Activated T-helper 1 cell treated with anti-CD3 and anti-CD28 coated beads, Interleukin-12 subunit alpha, Interleukin-12 subunit beta, Interleukin-2, Interleukin-4 antibody, amounts not matched to agents 30 ng/mL and 10 ng/mL and 1 ng/mL, durations not matched to agents 14 hours and 24 hours and 36 hours (primary cell): ENCODE measurements at regions of chr19 and their contacts with region 1.

Region 1: DNA sequence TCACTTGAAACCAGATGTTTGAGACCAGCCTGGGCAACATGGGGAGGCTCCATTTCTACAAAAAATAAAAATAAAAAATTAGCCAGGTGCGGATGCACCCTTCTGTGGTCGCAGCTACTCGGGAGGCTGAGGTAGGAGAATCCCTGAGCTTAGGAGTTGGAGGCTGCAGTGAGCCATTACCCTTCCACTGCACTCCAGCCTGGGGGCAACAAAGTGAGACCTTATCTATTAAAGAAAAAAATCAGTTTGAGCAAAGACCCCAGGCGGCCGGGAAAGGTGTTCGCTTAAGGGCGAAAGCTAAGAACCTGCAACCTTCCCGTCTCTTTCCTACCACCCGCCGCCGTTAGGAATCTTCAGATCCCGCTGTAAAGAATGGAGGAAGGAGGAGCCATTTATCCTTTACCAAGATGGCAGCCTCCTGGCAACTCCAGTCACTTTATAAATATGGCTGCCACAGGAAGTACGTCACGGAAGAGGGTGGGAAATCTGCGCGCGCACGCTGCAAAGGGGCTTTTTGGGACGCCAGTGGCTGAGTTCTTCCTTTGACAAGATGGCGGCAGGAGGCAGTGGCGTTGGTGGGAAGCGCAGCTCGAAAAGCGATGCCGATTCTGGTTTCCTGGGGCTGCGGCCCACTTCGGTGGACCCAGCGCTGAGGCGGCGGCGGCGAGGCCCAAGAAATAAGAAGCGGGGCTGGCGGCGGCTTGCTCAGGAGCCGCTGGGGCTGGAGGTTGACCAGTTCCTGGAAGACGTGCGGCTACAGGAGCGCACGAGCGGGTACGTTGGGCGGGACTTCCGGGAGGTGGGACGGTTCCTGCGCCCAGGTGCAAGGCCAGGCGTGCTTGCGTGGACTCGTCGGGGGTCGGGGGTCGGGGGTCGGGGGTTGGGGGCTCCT is at the start of gene NOP53:
- DNase-seq: peak; percentile 94
- H3K4me3 Mint-ChIP-seq: peak within 1 kb of the TSS; percentile 99
- H3K27ac Mint-ChIP-seq: peak within 1 kb of the TSS; percentile 100
- H3K4me1 Mint-ChIP-seq: peaks cover 37% of the 10 kb centered on the region
- H3K27me3 Mint-ChIP-seq: peaks cover 2% of the 10 kb centered on the region
- total RNA-seq, gene NOP53: 206 and 211 TPM in 2 replicates

Region 2: GRCh38 chr19:47428177-47428894 is 316.9 kb before region 1 on chr19:
- intact Hi-C with region 1: loop called (anchors 2 kb)
- DNase-seq: peak; percentile 78
- H3K4me3 Mint-ChIP-seq: no peak overlapping the region
- H3K27ac Mint-ChIP-seq: no peak overlapping the region
- H3K4me1 Mint-ChIP-seq: peaks cover 22% of the 10 kb centered on the region
- H3K27me3 Mint-ChIP-seq: peaks cover 30% of the 10 kb centered on the region

Region 3: GRCh38 chr19:47514869-47515588 is 230.2 kb before region 1 on chr19 and contains the start of gene NAPA:
- intact Hi-C with region 1: loop called (anchors 1 kb)
- DNase-seq: peak; percentile 100
- H3K4me3 Mint-ChIP-seq: peak within 1 kb of the TSS; percentile 95
- H3K27ac Mint-ChIP-seq: peak within 1 kb of the TSS; percentile 92
- H3K4me1 Mint-ChIP-seq: peaks cover 63% of the 10 kb centered on the region
- H3K27me3 Mint-ChIP-seq: peaks cover 4% of the 10 kb centered on the region
- total RNA-seq, gene NAPA: 66.4 and 68.7 TPM in 2 replicates

Region 4: DNA sequence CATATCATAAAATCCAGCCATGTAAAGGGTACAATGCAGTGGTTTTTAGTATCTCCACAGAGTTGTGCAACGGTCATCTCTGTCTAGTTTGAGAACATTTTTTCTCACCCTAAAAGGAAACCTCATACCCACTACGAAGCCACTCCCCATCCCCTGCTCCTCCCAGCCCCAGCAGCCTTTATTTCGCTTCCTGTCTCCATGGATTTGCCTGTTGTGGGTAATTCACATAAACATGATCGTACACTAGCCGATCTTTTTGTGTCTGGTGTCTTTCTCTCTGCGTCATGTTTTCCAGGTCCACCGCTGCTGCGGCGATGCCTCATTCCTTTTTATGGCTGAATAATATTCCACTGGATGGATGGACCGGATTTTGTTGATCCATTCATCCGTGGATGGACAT is 107.7 kb before region 1 on chr19:
- intact Hi-C with region 1: no loop called
- DNase-seq: no peak
- H3K4me3 Mint-ChIP-seq: no peak overlapping the region
- H3K27ac Mint-ChIP-seq: no peak overlapping the region
- H3K4me1 Mint-ChIP-seq: peaks cover 9% of the 10 kb centered on the region
- H3K27me3 Mint-ChIP-seq: no peaks in the 10 kb centered on the region

Region 5: GRCh38 chr19:47697863-47698609 is 47.2 kb before region 1 on chr19:
- intact Hi-C with region 1: loop called (anchors 1 kb)
- DNase-seq: peak; percentile 38
- H3K4me3 Mint-ChIP-seq: no peak overlapping the region
- H3K27ac Mint-ChIP-seq: peak overlapping the region; percentile 23
- H3K4me1 Mint-ChIP-seq: no peaks in the 10 kb centered on the region
- H3K27me3 Mint-ChIP-seq: no peaks in the 10 kb centered on the region

Region 6: GRCh38 chr19:47778089-47778953 is 33.1 kb after region 1 on chr19 and contains the start of gene SELENOW:
- intact Hi-C with region 1: loop called (anchors 1 kb)
- DNase-seq: peak; percentile 76
- H3K4me3 Mint-ChIP-seq: peak within 1 kb of the TSS; percentile 96
- H3K27ac Mint-ChIP-seq: peak within 1 kb of the TSS; percentile 94
- H3K4me1 Mint-ChIP-seq: peaks cover 12% of the 10 kb centered on the region
- H3K27me3 Mint-ChIP-seq: no peaks in the 10 kb centered on the region
- total RNA-seq, gene SELENOW: 106 and 107 TPM in 2 replicates